ENCODE measurements at regions of chr1 and their contacts with region 1.

Region 1: DNA sequence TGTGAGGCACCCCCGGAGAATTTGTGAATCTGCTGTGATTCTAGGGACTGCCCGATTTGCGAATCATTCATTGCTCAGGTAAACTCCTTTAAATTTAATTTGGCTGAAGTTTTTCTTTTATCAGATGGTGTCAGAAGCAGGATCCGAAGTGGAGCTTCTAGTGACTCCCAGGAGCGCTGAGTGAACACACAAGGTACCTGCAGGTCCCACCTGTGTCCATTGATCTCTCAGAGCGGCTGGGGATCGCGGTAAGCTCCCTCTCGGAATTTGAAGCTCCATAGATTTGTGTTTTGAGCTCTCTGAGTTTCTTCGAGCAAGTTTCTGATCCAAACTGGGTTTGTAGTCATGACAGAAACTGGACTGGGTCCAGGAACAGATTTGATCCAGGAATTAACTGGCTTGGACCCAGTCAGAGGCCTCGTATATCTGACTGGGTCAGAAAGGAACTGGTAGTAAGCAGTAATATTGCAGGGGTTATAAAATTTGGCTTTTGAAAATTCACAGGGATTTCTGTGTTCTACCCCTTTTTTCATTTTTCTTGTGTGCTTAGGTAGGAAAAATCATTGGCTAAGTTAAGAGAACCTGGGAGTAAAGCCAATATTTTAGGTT is 56.2 kb upstream of the EDEM3 start:
- DNase-seq: peak in 1 of 2 donors; percentile 83
- H3K4me3 ChIP-seq: peak overlapping the region in 1 of 2 donors; percentile 36
- H3K27ac ChIP-seq: peak overlapping the region; percentile 83 to 85
- H3K4me1 ChIP-seq: peaks cover 7 to 20% of the 10 kb centered on the region in 2 donors
- H3K27me3 ChIP-seq: no peaks in the 10 kb centered on the region
- CTCF ChIP-seq: no peak

Region 2: GRCh38 chr1:184672013-184672726 is 138.7 kb before region 1 on chr1:
- intact Hi-C with region 1: no loop called
- DNase-seq: no peak
- H3K4me3 ChIP-seq: no peak overlapping the region
- H3K27ac ChIP-seq: no peak overlapping the region
- H3K4me1 ChIP-seq: no peaks in the 10 kb centered on the region
- H3K27me3 ChIP-seq: no peaks in the 10 kb centered on the region
- CTCF ChIP-seq: no peak

Region 3: DNA sequence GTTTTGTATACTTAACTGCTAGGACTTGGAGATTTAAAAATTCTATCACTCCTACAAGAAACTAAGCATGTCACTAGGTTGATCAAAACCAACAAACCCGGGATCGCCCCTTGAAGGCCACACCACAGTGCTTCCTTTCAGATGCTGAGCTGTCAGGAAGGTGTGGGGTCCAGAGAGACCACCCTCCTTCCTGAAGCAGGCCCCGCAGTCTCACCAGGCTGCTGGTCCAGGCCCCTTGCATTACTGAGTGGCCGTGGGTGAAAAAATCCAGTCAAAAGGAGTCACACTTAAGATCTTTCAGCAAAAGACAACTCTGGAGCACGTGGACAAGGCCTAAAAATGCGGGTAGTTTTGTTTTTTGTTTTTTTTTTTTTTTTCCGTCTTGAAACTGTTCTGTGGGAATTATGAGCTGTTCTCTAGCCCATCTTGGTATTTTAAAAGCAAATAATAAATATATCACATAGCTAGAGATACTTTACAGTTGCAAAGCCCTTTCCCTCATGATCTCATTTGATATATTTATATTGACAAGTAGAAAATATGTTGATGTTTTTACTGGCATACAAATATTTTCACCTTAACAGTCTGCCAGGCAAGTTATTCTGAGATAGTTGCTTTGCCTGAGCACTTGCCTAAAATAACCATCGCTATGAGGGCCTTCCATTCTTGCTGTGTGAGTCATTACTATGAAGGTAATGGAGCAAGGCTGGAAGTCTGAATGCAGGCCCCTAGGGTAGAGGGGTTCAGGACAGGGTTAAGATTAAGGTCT is 16.9 kb after region 1 on chr1:
- intact Hi-C with region 1: loop called (anchors 2 kb)
- DNase-seq: peak in 1 of 2 donors; percentile 73
- H3K4me3 ChIP-seq: no peak overlapping the region
- H3K27ac ChIP-seq: peak overlapping the region; percentile 85 to 88
- H3K4me1 ChIP-seq: peaks cover 6 to 71% of the 10 kb centered on the region in 2 donors
- H3K27me3 ChIP-seq: no peaks in the 10 kb centered on the region
- CTCF ChIP-seq: no peak

Measured in ascending aorta (tissue), 2 donors.